Naive thymus-derived CD4-positive, alpha-beta T cell (primary cell): ENCODE measurements at regions of chr9 and their contacts with region 1.

Region 1: DNA sequence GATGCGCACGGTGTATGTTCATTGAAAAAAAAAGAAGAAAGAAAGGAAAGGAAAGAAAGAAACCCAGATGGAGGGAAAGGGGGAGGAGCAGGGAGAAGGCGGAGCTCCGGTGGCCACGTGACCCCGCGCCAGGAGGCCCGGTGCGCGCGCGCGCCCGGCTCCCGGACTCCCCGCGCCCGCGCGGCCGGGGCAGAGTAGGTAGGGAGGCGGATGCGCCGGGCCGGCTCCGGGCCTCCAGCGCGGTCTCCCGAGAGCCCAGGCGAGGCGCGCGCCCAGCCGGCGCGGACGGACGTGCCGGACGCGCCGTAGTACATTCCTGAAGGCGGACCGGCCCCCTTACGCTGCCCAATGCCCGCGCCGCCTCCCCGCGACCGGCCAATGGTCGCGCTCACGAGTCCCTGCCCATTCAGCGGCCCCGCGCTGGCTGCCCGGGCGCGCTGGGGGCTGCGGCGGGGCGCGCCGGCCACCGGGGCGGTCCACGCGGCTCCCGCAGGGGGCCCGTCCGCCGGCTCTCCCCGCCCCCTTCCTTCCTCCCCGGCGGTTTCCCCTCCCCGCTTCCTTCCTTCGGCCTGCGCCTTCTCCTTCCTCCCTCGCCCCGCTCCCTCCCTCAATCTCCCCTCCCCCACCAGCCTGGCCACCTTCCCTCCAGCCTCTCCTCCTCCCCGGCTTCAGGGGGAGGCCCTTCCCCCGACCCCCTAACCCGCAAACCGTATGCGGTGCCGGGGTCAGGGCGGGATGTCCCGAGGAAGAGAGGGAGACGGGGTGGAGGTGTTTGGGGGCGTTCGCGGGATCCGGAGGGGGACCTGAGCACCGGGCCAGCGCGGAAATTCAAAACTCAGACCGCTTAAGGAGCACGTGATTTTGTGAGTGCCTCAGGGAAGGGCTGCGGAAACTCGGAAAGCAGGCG is 5.8 kb downstream of the PTCH1 start:
- DNase-seq: peak; percentile 64 to 87 (median 80)
- ATAC-seq: peak; percentile 75
- H3K4me3 ChIP-seq: peak overlapping the region; percentile 66
- H3K4me3 Mint-ChIP-seq: peak overlapping the region; percentile 90 to 100 (median 96)
- H3K27ac ChIP-seq: peak overlapping the region; percentile 58
- H3K27ac Mint-ChIP-seq: peak overlapping the region; percentile 82 to 94 (median 85)
- H3K4me1 ChIP-seq: peaks cover 14 to 18% of the 10 kb centered on the region in 2 donors
- H3K4me1 Mint-ChIP-seq: peaks cover 26 to 45% (median 39%) of the 10 kb centered on the region in 7 donors
- H3K27me3 ChIP-seq: no peaks in the 10 kb centered on the region
- H3K27me3 Mint-ChIP-seq: peaks cover 0 to 79% (median 3%) of the 10 kb centered on the region in 5 donors

Region 2: GRCh38 chr9:95317119-95317892 is 193.7 kb before region 1 on chr9 and contains the start of gene FANCC:
- CTCF ChIA-PET with region 1: no interaction called
- POLR2A ChIA-PET with region 1: no interaction called
- intact Hi-C with region 1: loop called (anchors 1 kb)
- DNase-seq: peak; percentile 74 to 89 (median 81)
- ATAC-seq: peak; percentile 94
- H3K4me3 ChIP-seq: peak within 1 kb of the TSS; percentile 85
- H3K4me3 Mint-ChIP-seq: peak within 1 kb of the TSS; percentile 78 to 95 (median 92)
- H3K27ac ChIP-seq: peak within 1 kb of the TSS; percentile 91
- H3K27ac Mint-ChIP-seq: peak within 1 kb of the TSS; percentile 75 to 95 (median 89)
- H3K4me1 ChIP-seq: peaks cover 3 to 7% of the 10 kb centered on the region in 2 donors
- H3K4me1 Mint-ChIP-seq: peaks cover 8 to 33% (median 23%) of the 10 kb centered on the region in 7 donors
- H3K27me3 ChIP-seq: no peaks in the 10 kb centered on the region
- H3K27me3 Mint-ChIP-seq: peaks cover 0 to 26% (median 0%) of the 10 kb centered on the region in 5 donors
- total RNA-seq, gene FANCC: 5.7 to 14.6 (median 7.9) TPM

Region 3: DNA sequence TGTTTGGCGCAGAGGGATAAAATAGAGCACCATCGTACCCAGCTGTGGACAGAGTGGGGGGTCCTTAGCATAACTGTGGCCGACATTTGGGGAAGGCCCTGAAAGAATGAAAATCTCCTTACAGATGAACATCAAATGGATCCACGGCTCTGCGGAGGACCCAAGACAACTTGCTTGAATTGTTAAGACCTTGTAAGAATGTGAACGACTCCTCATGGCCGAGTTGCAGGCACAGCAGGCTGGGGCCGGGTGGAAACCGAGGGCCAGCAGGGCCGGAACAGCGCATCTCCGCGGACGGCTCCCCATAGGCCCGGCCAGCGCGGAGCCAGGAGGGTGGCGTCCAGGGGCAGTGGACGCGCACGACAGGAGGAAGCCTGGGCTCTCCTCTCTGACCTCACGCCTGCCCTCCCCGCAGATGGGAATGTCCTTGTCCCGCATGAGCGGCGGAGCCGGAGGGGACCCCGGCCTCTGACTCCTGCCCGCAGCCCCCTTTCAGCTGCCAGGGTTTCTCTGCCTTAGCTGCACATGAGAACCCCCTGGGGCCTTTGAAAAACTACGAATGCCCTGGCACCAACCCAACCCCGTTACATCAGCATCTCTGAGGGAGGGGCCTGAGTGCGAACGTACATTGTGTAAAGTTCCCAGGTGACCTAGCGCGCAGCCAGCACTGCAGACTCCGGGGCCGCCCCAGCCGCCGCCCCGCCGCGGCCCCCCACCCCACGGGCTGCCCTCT is 42.0 kb after region 1 on chr9:
- CTCF ChIA-PET with region 1: no interaction called
- POLR2A ChIA-PET with region 1: no interaction called
- intact Hi-C with region 1: loop called in 1 of 2 experiments (anchors 5 kb)
- DNase-seq: peak in 7 of 9 donors; percentile 13 to 58 (median 38)
- ATAC-seq: peak; percentile 79
- H3K4me3 ChIP-seq: no peak overlapping the region
- H3K4me3 Mint-ChIP-seq: peak overlapping the region in 9 of 10 donors; percentile 7 to 67 (median 57)
- H3K27ac ChIP-seq: no peak overlapping the region
- H3K27ac Mint-ChIP-seq: peak overlapping the region in 3 of 9 donors; percentile 17 to 73 (median 48)
- H3K4me1 ChIP-seq: no peaks in the 10 kb centered on the region
- H3K4me1 Mint-ChIP-seq: peaks cover 0 to 17% (median 6%) of the 10 kb centered on the region in 7 donors
- H3K27me3 ChIP-seq: no peaks in the 10 kb centered on the region
- H3K27me3 Mint-ChIP-seq: peaks cover 36 to 49% (median 39%) of the 10 kb centered on the region in 5 donors

Region 4: DNA sequence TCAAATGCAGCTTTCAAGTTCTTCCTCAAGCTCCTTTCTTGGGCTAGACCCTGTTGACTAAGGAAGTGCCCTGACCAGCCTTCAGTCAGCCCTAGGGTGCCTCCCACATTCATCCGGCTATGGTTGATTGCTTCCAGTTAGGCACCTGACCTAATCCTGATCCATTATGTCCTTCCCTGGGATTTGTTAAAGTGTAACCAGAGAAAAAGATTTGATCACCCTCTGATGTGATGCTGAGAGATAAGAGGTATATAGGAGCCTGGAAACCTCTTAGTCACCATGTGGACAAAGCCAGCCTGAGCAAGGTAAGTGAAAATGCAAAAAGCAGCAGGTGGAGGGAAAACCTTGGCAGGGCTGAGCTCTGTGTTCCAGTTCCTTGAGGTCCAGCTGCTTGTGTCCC is 185.7 kb after region 1 on chr9:
- CTCF ChIA-PET with region 1: no interaction called
- POLR2A ChIA-PET with region 1: no interaction called
- intact Hi-C with region 1: no loop called
- DNase-seq: no peak
- ATAC-seq: no peak
- H3K4me3 ChIP-seq: no peak overlapping the region
- H3K4me3 Mint-ChIP-seq: no peak overlapping the region
- H3K27ac ChIP-seq: no peak overlapping the region
- H3K27ac Mint-ChIP-seq: no peak overlapping the region
- H3K4me1 ChIP-seq: no peaks in the 10 kb centered on the region
- H3K4me1 Mint-ChIP-seq: peaks cover 0 to 2% (median 0%) of the 10 kb centered on the region in 7 donors
- H3K27me3 ChIP-seq: no peaks in the 10 kb centered on the region
- H3K27me3 Mint-ChIP-seq: peaks cover 0 to 13% (median 4%) of the 10 kb centered on the region in 5 donors

Region 5: GRCh38 chr9:96020792-96021550 is 510.0 kb after region 1 on chr9:
- CTCF ChIA-PET with region 1: no interaction called
- POLR2A ChIA-PET with region 1: interaction called, 3 read pairs
- intact Hi-C with region 1: loop called in 1 of 2 experiments (anchors 2 kb)
- DNase-seq: peak in 8 of 9 donors; percentile 35 to 70 (median 44)
- ATAC-seq: peak; percentile 70
- H3K4me3 ChIP-seq: peak overlapping the region; percentile 61
- H3K4me3 Mint-ChIP-seq: peak overlapping the region; percentile 71 to 91 (median 86)
- H3K27ac ChIP-seq: peak overlapping the region; percentile 72
- H3K27ac Mint-ChIP-seq: peak overlapping the region; percentile 28 to 97 (median 70)
- H3K4me1 ChIP-seq: peaks cover 27 to 34% of the 10 kb centered on the region in 2 donors
- H3K4me1 Mint-ChIP-seq: peaks cover 47 to 74% (median 63%) of the 10 kb centered on the region in 7 donors
- H3K27me3 ChIP-seq: no peaks in the 10 kb centered on the region
- H3K27me3 Mint-ChIP-seq: peaks cover 0 to 31% (median 5%) of the 10 kb centered on the region in 5 donors

Region 6: DNA sequence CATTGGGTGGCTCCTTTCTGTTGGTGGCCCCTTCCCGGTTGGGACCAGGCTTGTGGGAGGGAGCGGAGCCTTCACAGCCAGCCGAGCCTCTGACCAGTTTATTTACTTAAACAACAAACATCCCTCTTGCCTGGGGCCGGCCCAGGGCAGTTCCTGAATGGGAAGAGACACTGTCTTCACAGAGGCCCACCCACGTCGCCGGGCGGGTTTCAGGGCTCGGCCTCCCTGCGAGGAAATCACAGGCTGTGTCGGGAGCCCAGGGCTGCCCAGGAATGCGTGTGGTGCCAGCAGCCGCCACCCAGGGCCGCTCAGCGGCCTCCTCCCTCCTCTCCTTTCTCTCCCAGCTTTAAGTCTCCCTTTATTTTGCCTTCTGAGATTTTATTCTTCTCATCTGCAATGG is 658.5 kb after region 1 on chr9:
- CTCF ChIA-PET with region 1: no interaction called
- POLR2A ChIA-PET with region 1: no interaction called
- intact Hi-C with region 1: no loop called
- DNase-seq: no peak
- ATAC-seq: no peak
- H3K4me3 ChIP-seq: no peak overlapping the region
- H3K4me3 Mint-ChIP-seq: no peak overlapping the region
- H3K27ac ChIP-seq: no peak overlapping the region
- H3K27ac Mint-ChIP-seq: no peak overlapping the region
- H3K4me1 ChIP-seq: no peaks in the 10 kb centered on the region
- H3K4me1 Mint-ChIP-seq: no peaks in the 10 kb centered on the region
- H3K27me3 ChIP-seq: no peaks in the 10 kb centered on the region
- H3K27me3 Mint-ChIP-seq: peaks cover 4 to 23% (median 13%) of the 10 kb centered on the region in 5 donors

Region 7: GRCh38 chr9:96418074-96418809 is 907.3 kb after region 1 on chr9 and contains the start of gene ZNF367:
- CTCF ChIA-PET with region 1: no interaction called
- POLR2A ChIA-PET with region 1: no interaction called
- intact Hi-C with region 1: loop called in 1 of 2 experiments (anchors 10 kb)
- DNase-seq: peak; percentile 75 to 94 (median 82)
- ATAC-seq: peak; percentile 85
- H3K4me3 ChIP-seq: peak within 1 kb of the TSS; percentile 94
- H3K4me3 Mint-ChIP-seq: peak within 1 kb of the TSS; percentile 88 to 98 (median 92)
- H3K27ac ChIP-seq: peak within 1 kb of the TSS; percentile 98
- H3K27ac Mint-ChIP-seq: peak within 1 kb of the TSS; percentile 92 to 98 (median 96)
- H3K4me1 ChIP-seq: peaks cover 19 to 31% of the 10 kb centered on the region in 2 donors
- H3K4me1 Mint-ChIP-seq: peaks cover 21 to 39% (median 31%) of the 10 kb centered on the region in 7 donors
- H3K27me3 ChIP-seq: no peaks in the 10 kb centered on the region
- H3K27me3 Mint-ChIP-seq: no peaks in the 10 kb centered on the region
- total RNA-seq, gene ZNF367: 3.8 to 22.9 (median 5.5) TPM